ENCODE measurements at regions of chr6 and their contacts with region 1.

Region 1: GRCh38 chr6:45293306-45293705 is 34.8 kb upstream of the RUNX2 start:
- DNase-seq: peak in 1 of 2 donors; percentile 20
- ATAC-seq: no peak
- H3K4me3 ChIP-seq: no peak overlapping the region
- H3K4me3 Mint-ChIP-seq: peak overlapping the region; percentile 1
- H3K27ac ChIP-seq: peak overlapping the region; percentile 37
- H3K27ac Mint-ChIP-seq: peak overlapping the region; percentile 3 to 11
- H3K4me1 ChIP-seq: no peaks in the 10 kb centered on the region
- H3K4me1 Mint-ChIP-seq: peaks cover 12 to 20% of the 10 kb centered on the region in 2 donors
- H3K27me3 ChIP-seq: no peaks in the 10 kb centered on the region
- H3K27me3 Mint-ChIP-seq: no peaks in the 10 kb centered on the region
- CTCF ChIP-seq: no peak

Region 2: DNA sequence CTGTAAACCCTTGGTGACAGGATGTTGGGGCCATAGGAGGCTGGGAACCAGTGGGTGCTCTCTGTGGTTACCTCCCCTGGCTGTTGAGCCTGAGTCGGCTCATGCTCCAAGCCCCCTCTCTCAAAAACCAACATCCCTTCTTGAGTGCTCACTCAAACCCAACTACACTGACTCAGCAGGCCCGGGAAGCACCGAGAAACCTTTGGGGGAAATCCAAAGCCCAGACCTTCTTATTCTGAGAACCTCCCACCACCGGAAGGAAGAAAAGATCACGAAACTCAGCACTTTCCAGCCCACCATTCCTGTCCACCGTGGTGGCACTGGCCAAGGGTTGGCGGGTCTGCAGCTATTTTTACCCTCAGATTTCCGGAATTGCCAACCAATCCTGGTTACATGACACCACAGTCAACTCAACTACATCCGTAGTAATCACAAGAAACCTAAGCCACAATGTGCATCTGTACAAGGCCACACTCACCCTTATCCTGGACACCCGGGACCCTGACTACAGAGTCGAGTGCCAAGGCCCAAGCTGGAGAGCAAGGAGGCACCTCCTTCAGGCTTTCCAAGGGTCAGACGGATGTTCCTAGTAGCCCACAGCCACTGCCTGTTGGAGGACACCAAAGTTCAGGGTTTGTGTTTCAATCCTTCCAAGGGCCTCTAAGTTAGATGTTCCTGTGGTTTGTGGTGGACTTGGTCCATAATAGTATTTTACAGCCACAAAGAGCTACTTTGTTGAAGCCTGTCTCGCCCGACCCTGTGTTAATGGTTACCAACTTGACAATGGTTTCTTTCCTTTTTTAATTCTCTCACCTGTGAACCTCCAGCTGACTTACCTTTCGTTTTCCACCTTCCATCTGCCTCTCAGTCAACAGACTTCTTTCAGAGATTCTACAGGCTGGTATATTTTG is 588.8 kb before region 1 on chr6:
- intact Hi-C with region 1: no loop called
- DNase-seq: no peak
- ATAC-seq: no peak
- H3K4me3 ChIP-seq: no peak overlapping the region
- H3K4me3 Mint-ChIP-seq: no peak overlapping the region
- H3K27ac ChIP-seq: no peak overlapping the region
- H3K27ac Mint-ChIP-seq: no peak overlapping the region
- H3K4me1 ChIP-seq: no peaks in the 10 kb centered on the region
- H3K4me1 Mint-ChIP-seq: no peaks in the 10 kb centered on the region
- H3K27me3 ChIP-seq: no peaks in the 10 kb centered on the region
- H3K27me3 Mint-ChIP-seq: no peaks in the 10 kb centered on the region
- CTCF ChIP-seq: no peak

Region 3: DNA sequence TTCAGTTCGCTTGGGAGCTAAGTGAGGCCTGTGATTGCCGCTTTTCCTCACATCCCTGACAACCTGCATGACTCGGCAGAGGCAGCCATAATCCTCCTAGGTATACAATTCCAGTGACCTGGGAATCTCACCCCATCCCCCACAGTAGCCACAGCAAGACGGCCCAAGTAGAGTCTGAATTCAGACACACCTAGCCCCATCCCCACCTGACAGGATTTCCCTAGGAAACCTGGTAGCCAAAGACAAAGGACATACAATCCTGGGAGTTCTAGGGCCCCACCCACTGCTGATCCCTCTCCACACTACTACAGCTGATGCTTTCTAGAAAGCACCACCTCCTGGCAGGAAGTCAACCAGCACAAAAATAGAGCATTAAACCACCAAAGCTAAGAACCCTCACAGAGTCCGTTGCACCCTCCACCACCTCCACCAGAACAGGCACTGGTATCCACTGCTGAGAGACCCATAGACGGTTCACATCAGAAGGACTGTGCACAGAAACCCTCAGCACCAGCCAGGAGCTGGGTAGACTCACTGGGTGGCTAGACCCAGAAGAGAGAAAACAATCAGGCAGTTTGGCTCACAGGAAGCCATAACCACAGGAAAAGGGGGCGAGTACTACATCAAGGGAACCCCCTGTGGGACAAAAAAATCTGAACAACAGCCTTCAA is 16.9 kb after region 1 on chr6:
- intact Hi-C with region 1: loop called (anchors 1 kb)
- DNase-seq: peak in 1 of 2 donors; percentile 69
- ATAC-seq: peak in 2 of 3 donors; percentile 26 to 63
- H3K4me3 ChIP-seq: no peak overlapping the region
- H3K4me3 Mint-ChIP-seq: peak overlapping the region; percentile 45
- H3K27ac ChIP-seq: peak overlapping the region; percentile 19
- H3K27ac Mint-ChIP-seq: peak overlapping the region; percentile 26 to 69
- H3K4me1 ChIP-seq: peaks cover 12% of the 10 kb centered on the region
- H3K4me1 Mint-ChIP-seq: peaks cover 18 to 21% of the 10 kb centered on the region in 2 donors
- H3K27me3 ChIP-seq: no peaks in the 10 kb centered on the region
- H3K27me3 Mint-ChIP-seq: no peaks in the 10 kb centered on the region
- CTCF ChIP-seq: no peak

Measured in natural killer cell (primary cell).